Transverse colon (tissue), 4 donors: ENCODE measurements at regions of chr2 and their contacts with region 1.

Region 1: GRCh38 chr2:149931486-149931885 is 343.9 kb upstream of the MMADHC start:
- DNase-seq: no peak
- H3K4me3 ChIP-seq: no peak overlapping the region
- H3K27ac ChIP-seq: no peak overlapping the region
- H3K4me1 ChIP-seq: no peaks in the 10 kb centered on the region
- H3K27me3 ChIP-seq: no peaks in the 10 kb centered on the region
- CTCF ChIP-seq: no peak
- EP300 ChIP-seq: no peak
- POLR2A ChIP-seq: no peak

Region 2: DNA sequence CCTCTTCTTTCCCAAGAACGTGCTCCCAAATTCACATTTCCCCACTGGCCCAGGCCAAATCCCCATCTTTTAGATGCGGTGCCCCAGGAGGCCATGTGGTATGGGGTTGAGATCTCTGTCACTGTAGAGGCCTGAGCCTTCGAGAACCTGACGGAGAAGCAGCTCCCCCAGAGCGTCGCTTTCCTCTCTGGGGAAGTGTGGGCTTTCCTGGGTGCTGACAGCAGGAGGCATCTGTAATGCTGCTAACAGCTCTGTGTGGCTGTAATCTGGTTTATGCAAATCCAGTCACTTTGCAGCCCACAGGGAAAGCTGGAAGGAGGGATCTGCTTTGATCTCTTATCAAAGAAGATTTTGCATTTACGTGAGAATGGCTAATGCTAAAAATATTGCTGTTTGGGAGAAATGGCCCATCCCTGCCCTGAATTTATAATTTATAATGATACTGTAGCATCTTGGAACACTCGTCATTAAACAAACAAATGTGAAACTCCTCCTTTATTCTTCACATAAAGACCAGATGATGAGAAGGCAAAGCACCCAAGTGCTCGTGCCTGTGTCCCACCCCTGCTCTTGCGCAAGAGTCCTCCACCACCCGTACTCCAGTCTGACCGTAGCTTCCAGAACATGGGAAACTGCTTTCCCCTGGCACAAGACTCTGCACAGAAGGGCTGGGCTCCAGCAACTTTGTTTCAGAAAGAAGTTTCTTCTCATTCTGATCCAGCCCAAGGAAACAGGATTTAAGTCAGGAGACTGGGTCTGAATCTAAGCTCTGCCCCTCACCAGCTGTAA is 1396.9 kb before region 1 on chr2:
- in situ Hi-C with region 1: no loop called
- intact Hi-C with region 1: loop called (anchors 5 kb)
- DNase-seq: no peak
- H3K4me3 ChIP-seq: no peak overlapping the region
- H3K27ac ChIP-seq: no peak overlapping the region
- H3K4me1 ChIP-seq: no peaks in the 10 kb centered on the region
- H3K27me3 ChIP-seq: no peaks in the 10 kb centered on the region
- CTCF ChIP-seq: no peak
- EP300 ChIP-seq: no peak
- POLR2A ChIP-seq: no peak